ENCODE measurements at regions of chr21 and their contacts with region 1.

Region 1: DNA sequence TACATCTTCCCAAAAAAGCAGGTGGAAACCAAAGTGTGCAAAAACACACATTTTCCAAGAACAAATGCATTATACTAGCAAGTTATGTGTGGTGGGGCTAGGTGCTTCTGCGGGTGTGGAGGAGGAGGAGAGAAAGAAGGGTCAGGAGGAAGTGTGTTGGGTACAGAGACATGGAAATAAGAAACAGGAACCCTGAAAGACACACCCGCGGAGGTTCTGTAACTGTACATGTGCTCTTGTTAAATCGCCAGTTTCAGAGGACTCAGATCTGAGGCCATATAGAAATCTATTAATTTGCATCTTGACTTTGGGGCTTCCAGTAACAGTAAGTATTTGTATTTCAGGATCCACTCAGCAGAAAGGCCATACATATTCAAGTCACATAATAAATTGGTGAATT is 30.9 kb downstream of the ERG start:
- DNase-seq: no peak
- ATAC-seq: no peak
- H3K4me3 Mint-ChIP-seq: no peak overlapping the region
- H3K27ac Mint-ChIP-seq: no peak overlapping the region
- H3K4me1 Mint-ChIP-seq: peaks cover 30% of the 10 kb centered on the region
- H3K27me3 Mint-ChIP-seq: no peaks in the 10 kb centered on the region; the same call in 1 of the 2 replicates
- CTCF ChIP-seq: no peak

Region 2: GRCh38 chr21:38438476-38438893 is 28.9 kb before region 1 on chr21:
- CTCF ChIA-PET with region 1: no interaction called
- POLR2A ChIA-PET with region 1: no interaction called
- DNase-seq: no peak
- ATAC-seq: no peak
- H3K4me3 Mint-ChIP-seq: no peak overlapping the region
- H3K27ac Mint-ChIP-seq: no peak overlapping the region
- H3K4me1 Mint-ChIP-seq: 0 out of 2 replicates have a peak, but pooled peaks cover 11% of the 10 kb centered on the region
- H3K27me3 Mint-ChIP-seq: no peaks in the 10 kb centered on the region; the same call in 1 of the 2 replicates
- CTCF ChIP-seq: no peak

Region 3: GRCh38 chr21:38505654-38506515 is 38.5 kb after region 1 on chr21:
- CTCF ChIA-PET with region 1: interaction called, 10 read pairs
- POLR2A ChIA-PET with region 1: no interaction called
- DNase-seq: no peak
- ATAC-seq: peak; percentile 79
- H3K4me3 Mint-ChIP-seq: no peak overlapping the region
- H3K27ac Mint-ChIP-seq: peak overlapping the region; percentile 72; the same call in 1 of the 2 replicates
- H3K4me1 Mint-ChIP-seq: peaks cover 46% of the 10 kb centered on the region
- H3K27me3 Mint-ChIP-seq: no peaks in the 10 kb centered on the region; the same call in 1 of the 2 replicates
- CTCF ChIP-seq: peak; percentile 29; the same call in 1 of the 2 replicates

Region 4: GRCh38 chr21:38561613-38562581 is 94.5 kb after region 1 on chr21:
- CTCF ChIA-PET with region 1: no interaction called
- POLR2A ChIA-PET with region 1: no interaction called
- DNase-seq: no peak
- ATAC-seq: no peak
- H3K4me3 Mint-ChIP-seq: no peak overlapping the region
- H3K27ac Mint-ChIP-seq: no peak overlapping the region
- H3K4me1 Mint-ChIP-seq: peaks cover 18% of the 10 kb centered on the region
- H3K27me3 Mint-ChIP-seq: no peaks in the 10 kb centered on the region
- CTCF ChIP-seq: no peak

Region 5: DNA sequence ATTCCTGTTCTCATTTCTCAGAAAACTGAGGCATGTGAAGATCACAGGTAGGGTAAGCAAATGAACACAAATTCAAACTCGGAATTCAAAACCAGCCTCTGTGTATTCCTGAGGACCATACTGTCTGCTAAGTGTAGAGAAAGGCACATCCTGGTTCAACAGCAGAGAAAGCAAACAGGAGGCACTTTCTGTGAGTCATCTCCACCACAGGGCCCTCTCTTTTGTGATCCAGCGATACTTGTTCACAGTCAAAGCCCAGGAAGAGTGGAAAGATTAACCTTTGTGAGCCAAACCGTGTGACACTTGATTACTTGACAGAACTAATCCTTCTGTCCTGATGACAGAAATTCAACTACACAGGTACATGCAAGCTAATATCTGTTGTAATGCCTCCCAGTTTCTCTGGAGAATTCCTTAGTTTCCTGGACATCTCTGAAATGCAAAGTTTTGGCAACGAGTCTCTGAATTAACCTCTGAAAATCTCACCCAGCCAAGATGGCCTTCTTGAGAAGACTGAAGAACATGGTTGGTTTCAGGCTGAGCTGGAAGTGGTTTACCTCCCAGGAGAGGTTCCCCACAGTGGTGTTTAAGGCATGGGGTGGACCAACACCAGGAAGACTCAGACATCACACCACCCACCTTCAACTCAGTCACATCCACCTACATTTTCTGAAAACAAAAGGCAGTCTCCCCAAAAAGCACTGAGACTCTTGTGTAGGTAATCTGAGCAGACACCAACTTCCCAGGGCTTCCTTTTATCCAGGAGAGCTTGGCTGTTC is 129.1 kb after region 1 on chr21:
- CTCF ChIA-PET with region 1: no interaction called
- POLR2A ChIA-PET with region 1: no interaction called
- DNase-seq: no peak
- ATAC-seq: no peak
- H3K4me3 Mint-ChIP-seq: 0 out of 2 replicates have a peak overlapping the region, but pooled peaks have one; percentile 11
- H3K27ac Mint-ChIP-seq: peak overlapping the region; percentile 9; the same call in 1 of the 2 replicates
- H3K4me1 Mint-ChIP-seq: peaks cover 35% of the 10 kb centered on the region
- H3K27me3 Mint-ChIP-seq: peaks cover 3% of the 10 kb centered on the region; the same call in 1 of the 2 replicates
- CTCF ChIP-seq: no peak

Measured in WTC11 (cell line).